ENCODE measurements at regions of chr20 and their contacts with region 1.

Region 1: DNA sequence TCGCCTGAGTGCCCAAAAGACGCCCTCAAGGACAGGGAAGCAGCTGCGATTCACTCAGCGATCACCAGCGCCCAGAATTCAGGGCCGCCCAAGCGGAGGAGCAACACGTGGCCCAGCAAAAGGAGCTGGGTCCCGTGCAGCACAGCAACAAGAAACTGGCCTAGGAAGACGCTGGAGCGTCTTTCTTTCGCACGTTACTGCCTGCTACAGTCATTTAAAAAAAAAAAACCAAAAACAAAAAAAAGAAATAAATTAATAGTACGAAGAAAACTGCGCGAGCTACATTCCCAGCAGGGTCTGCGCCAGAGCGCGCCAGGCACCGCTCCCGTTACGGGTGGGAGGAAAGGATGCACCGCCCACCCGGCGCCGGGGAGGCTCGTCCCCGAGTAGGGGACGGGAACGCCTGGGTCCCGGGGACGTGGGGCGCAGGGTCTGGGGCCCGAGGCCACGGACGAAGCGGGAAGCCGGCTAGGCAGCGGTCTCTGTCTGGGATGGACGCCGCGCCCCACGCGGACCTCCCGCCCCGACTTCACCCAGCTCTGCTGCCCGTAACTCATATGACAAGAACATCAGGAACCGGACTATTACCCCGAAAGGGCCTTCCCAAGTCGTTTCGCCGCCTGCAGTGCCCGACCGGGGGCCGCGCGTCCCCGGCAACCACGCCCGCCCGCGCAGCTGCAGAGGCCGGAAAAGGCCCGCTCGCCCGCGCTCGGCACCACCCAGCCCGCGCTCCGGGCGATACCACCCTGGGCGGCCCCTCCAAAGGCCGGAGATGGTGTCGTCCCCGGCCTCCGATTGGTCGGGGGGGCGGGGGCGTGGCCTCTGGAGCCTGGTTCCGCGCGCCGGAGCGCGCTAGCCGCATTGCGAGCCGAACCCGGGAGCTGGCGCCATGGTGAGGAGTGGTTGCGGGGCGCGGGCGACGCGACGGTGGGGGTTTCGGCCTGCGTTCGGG is at the start of gene NOP56:
- DNase-seq: peak; percentile 85 to 98 (median 95)
- ATAC-seq: peak; percentile 86
- H3K4me3 ChIP-seq: peak within 1 kb of the TSS; percentile 81
- H3K4me3 Mint-ChIP-seq: peak within 1 kb of the TSS; percentile 95
- H3K27ac ChIP-seq: peak within 1 kb of the TSS; percentile 66 to 83
- H3K27ac Mint-ChIP-seq: peak within 1 kb of the TSS; percentile 94
- H3K4me1 ChIP-seq: peaks cover 48% of the 10 kb centered on the region
- H3K4me1 Mint-ChIP-seq: peaks cover 59% of the 10 kb centered on the region
- H3K27me3 ChIP-seq: no peaks in the 10 kb centered on the region
- H3K27me3 Mint-ChIP-seq: no peaks in the 10 kb centered on the region
- CTCF ChIP-seq: no peak
- total RNA-seq, gene NOP56: 261 to 262 TPM

Region 2: GRCh38 chr20:2470423-2471193 is 181.4 kb before region 1 on chr20 and contains the start of gene SNRPB:
- CTCF ChIA-PET with region 1: no interaction called
- POLR2A ChIA-PET with region 1: interaction called, 45 read pairs
- intact Hi-C with region 1: loop called in 1 of 2 experiments (anchors 5 kb)
- DNase-seq: peak; percentile 94 to 99 (median 95)
- ATAC-seq: peak; percentile 93
- H3K4me3 ChIP-seq: peak within 1 kb of the TSS; percentile 90
- H3K4me3 Mint-ChIP-seq: peak within 1 kb of the TSS; percentile 98
- H3K27ac ChIP-seq: peak within 1 kb of the TSS; percentile 91 to 96
- H3K27ac Mint-ChIP-seq: peak within 1 kb of the TSS; percentile 98
- H3K4me1 ChIP-seq: peaks cover 23% of the 10 kb centered on the region
- H3K4me1 Mint-ChIP-seq: peaks cover 54% of the 10 kb centered on the region
- H3K27me3 ChIP-seq: no peaks in the 10 kb centered on the region
- H3K27me3 Mint-ChIP-seq: no peaks in the 10 kb centered on the region
- CTCF ChIP-seq: no peak
- total RNA-seq, gene SNRPB: 146 to 147 TPM

Region 3: DNA sequence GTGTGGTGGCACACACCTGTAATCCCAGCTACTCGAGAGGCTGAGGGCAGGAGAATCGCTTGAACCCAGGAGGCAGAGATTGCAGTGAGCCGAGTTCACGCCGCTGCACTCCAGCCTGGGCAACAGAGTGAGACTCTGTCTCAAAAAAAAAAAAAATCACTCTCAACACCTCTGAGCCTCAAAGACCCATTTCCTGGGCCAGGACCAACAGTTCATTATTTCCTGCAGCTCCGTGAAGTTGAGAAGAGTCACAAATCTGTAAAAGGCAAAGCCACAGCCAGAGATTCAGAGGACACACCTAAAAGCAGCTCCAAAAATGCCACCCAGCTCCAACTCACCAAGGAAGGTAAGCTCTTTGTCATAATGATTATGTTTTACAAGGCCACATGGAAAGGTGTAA is 14.8 kb before region 1 on chr20:
- CTCF ChIA-PET with region 1: no interaction called
- POLR2A ChIA-PET with region 1: interaction called, 10 read pairs
- intact Hi-C with region 1: no loop called
- DNase-seq: peak in 1 of 14 experiments; percentile 60
- ATAC-seq: no peak
- H3K4me3 ChIP-seq: no peak overlapping the region
- H3K4me3 Mint-ChIP-seq: no peak overlapping the region
- H3K27ac ChIP-seq: no peak overlapping the region
- H3K27ac Mint-ChIP-seq: no peak overlapping the region
- H3K4me1 ChIP-seq: peaks cover 12% of the 10 kb centered on the region
- H3K4me1 Mint-ChIP-seq: peaks cover 5% of the 10 kb centered on the region
- H3K27me3 ChIP-seq: peaks cover 0 to 8% of the 10 kb centered on the region in 2 experiments
- H3K27me3 Mint-ChIP-seq: peaks cover 14% of the 10 kb centered on the region
- CTCF ChIP-seq: no peak

Region 4: GRCh38 chr20:2729251-2729713 is 77.2 kb after region 1 on chr20:
- CTCF ChIA-PET with region 1: no interaction called
- POLR2A ChIA-PET with region 1: interaction called, 10 read pairs
- intact Hi-C with region 1: no loop called
- DNase-seq: peak in 11 of 14 experiments; percentile 25 to 78 (median 38)
- ATAC-seq: peak; percentile 97
- H3K4me3 ChIP-seq: no peak overlapping the region
- H3K4me3 Mint-ChIP-seq: peak overlapping the region; percentile 66
- H3K27ac ChIP-seq: peak overlapping the region; percentile 47 to 53
- H3K27ac Mint-ChIP-seq: peak overlapping the region; percentile 88
- H3K4me1 ChIP-seq: peaks cover 19% of the 10 kb centered on the region
- H3K4me1 Mint-ChIP-seq: peaks cover 33% of the 10 kb centered on the region
- H3K27me3 ChIP-seq: no peaks in the 10 kb centered on the region
- H3K27me3 Mint-ChIP-seq: no peaks in the 10 kb centered on the region
- CTCF ChIP-seq: no peak

Region 5: GRCh38 chr20:2840138-2840966 is 188.3 kb after region 1 on chr20 and contains the starts of genes PCED1A and VPS16:
- CTCF ChIA-PET with region 1: no interaction called
- POLR2A ChIA-PET with region 1: interaction called, 13 read pairs
- intact Hi-C with region 1: loop called in 1 of 2 experiments (anchors 5 kb)
- DNase-seq: peak; percentile 78 to 94 (median 86)
- ATAC-seq: peak; percentile 95
- H3K4me3 ChIP-seq: peak within 1 kb of the TSS; percentile 93
- H3K4me3 Mint-ChIP-seq: peak within 1 kb of the TSS; percentile 93
- H3K27ac ChIP-seq: peak within 1 kb of the TSS; percentile 61 to 81
- H3K27ac Mint-ChIP-seq: peak within 1 kb of the TSS; percentile 75
- H3K4me1 ChIP-seq: peaks cover 31% of the 10 kb centered on the region
- H3K4me1 Mint-ChIP-seq: peaks cover 53% of the 10 kb centered on the region
- H3K27me3 ChIP-seq: no peaks in the 10 kb centered on the region
- H3K27me3 Mint-ChIP-seq: no peaks in the 10 kb centered on the region
- CTCF ChIP-seq: no peak
- total RNA-seq, gene PCED1A: 69.2 to 69.7 TPM
- total RNA-seq, gene VPS16: 38.2 to 40.6 TPM

Region 6: GRCh38 chr20:2955257-2955970 is 303.4 kb after region 1 on chr20:
- CTCF ChIA-PET with region 1: no interaction called
- POLR2A ChIA-PET with region 1: no interaction called
- intact Hi-C with region 1: no loop called
- DNase-seq: no peak
- ATAC-seq: no peak
- H3K4me3 ChIP-seq: no peak overlapping the region
- H3K4me3 Mint-ChIP-seq: no peak overlapping the region
- H3K27ac ChIP-seq: no peak overlapping the region
- H3K27ac Mint-ChIP-seq: no peak overlapping the region
- H3K4me1 ChIP-seq: no peaks in the 10 kb centered on the region
- H3K4me1 Mint-ChIP-seq: no peaks in the 10 kb centered on the region
- H3K27me3 ChIP-seq: no peaks in the 10 kb centered on the region
- H3K27me3 Mint-ChIP-seq: no peaks in the 10 kb centered on the region
- CTCF ChIP-seq: no peak

Measured in CD4-positive, alpha-beta T cell (primary cell).